ENCODE measurements at regions of chr7 and their contacts with region 1.

Region 1: DNA sequence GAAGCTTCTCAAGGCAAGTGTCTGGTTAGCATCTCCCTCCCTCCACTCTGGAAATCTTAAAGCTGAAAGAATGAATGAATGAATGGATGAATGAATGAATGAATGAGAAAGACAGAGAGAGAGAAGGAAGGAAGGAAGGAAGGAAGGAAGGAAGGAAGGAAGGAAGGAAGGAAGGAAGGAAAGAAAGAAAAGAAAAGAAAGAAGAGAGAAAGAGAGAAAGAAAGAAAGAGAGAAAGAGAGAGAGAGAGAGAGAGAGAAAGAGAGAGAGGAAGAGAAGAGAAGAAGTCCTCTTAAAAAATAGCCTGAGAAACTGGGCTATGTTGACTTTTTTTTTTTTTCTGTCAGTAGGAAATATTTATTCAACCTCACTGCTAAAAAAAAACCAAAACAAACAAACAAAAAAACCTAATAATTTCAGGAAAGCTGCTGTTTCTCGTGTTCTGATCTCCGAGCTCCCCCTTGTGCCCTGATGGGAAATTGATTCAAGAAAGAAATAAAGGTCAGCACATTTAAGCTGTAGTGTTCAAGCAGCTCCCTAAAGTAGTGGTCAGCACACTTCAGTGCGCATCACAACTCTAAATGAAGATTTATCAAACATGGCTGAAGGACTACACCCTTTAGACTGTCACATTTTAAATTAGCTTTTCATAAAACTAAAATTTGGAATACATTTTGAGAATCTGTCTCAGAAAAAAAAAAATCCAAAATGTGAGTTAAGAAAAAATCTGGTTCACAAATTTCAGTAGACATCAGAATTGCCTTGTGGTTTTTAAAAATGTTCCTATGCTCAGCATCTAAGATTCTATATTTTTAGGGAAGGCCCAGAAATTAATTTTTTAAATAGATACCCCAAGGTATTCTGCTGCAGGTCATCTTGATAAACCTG is 154.3 kb downstream of the ELAPOR2 start:
- DNase-seq: no peak
- ATAC-seq: peak; percentile 61; the same call in 2 of the 3 replicates
- H3K4me3 ChIP-seq: no peak overlapping the region
- H3K27ac ChIP-seq: no peak overlapping the region
- H3K4me1 ChIP-seq: no peaks in the 10 kb centered on the region
- H3K27me3 ChIP-seq: no peaks in the 10 kb centered on the region
- CTCF ChIP-seq: peak; percentile 55 to 67 (median 62)
- EP300 ChIP-seq: no peak
- POLR2A ChIP-seq: no peak
- RAD21 ChIP-seq: peak; percentile 95

Region 2: GRCh38 chr7:85882335-85882734 is 1022.9 kb before region 1 on chr7:
- CTCF ChIA-PET with region 1: interaction called, 3 read pairs
- POLR2A ChIA-PET with region 1: no interaction called
- RAD21 ChIA-PET with region 1: no interaction called
- SMC1A ChIA-PET with region 1: no interaction called
- in situ Hi-C with region 1: loop called (anchors 10 kb)
- intact Hi-C with region 1: no loop called
- DNase-seq: no peak
- ATAC-seq: no peak
- H3K4me3 ChIP-seq: no peak overlapping the region
- H3K27ac ChIP-seq: no peak overlapping the region
- H3K4me1 ChIP-seq: no peaks in the 10 kb centered on the region
- H3K27me3 ChIP-seq: no peaks in the 10 kb centered on the region
- CTCF ChIP-seq: no peak
- EP300 ChIP-seq: no peak
- POLR2A ChIP-seq: no peak
- RAD21 ChIP-seq: no peak

Region 3: DNA sequence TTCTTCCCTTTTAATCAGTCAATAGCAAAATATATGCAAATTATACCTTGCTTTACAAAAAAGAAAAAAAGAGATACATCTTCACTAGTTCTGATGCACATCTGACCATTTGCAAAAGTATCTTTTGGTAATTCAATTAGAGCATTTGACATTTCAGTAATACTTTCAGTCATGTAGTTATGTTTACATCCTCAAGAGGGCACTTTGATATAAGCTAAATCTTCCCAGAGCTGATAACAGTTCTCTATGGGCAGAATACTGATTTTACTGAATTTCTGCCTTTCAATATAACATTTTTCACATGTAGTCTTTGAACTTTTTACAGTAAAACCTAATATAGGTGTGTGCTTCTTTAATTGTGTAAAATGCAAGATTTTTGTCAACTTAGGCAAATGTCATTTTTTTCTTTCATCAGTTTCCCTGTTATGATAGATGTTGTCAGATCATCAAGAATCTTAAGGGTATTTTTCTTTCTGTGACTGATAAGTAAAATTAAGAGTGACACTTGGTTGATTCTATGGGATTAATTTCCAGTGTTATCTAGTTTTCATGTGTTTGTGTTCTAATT is 1014.9 kb before region 1 on chr7:
- CTCF ChIA-PET with region 1: interaction called, 9 read pairs
- POLR2A ChIA-PET with region 1: no interaction called
- RAD21 ChIA-PET with region 1: interaction called, 12 read pairs
- SMC1A ChIA-PET with region 1: interaction called, 4 read pairs
- in situ Hi-C with region 1: loop called (anchors 10 kb)
- intact Hi-C with region 1: loop called (anchors 2 kb)
- DNase-seq: no peak
- ATAC-seq: peak; percentile 66
- H3K4me3 ChIP-seq: no peak overlapping the region
- H3K27ac ChIP-seq: no peak overlapping the region
- H3K4me1 ChIP-seq: no peaks in the 10 kb centered on the region
- H3K27me3 ChIP-seq: no peaks in the 10 kb centered on the region
- CTCF ChIP-seq: peak; percentile 42 to 57 (median 55); a peak in 5 of 6 replicates
- EP300 ChIP-seq: no peak
- POLR2A ChIP-seq: no peak
- RAD21 ChIP-seq: peak; percentile 77

Region 4: DNA sequence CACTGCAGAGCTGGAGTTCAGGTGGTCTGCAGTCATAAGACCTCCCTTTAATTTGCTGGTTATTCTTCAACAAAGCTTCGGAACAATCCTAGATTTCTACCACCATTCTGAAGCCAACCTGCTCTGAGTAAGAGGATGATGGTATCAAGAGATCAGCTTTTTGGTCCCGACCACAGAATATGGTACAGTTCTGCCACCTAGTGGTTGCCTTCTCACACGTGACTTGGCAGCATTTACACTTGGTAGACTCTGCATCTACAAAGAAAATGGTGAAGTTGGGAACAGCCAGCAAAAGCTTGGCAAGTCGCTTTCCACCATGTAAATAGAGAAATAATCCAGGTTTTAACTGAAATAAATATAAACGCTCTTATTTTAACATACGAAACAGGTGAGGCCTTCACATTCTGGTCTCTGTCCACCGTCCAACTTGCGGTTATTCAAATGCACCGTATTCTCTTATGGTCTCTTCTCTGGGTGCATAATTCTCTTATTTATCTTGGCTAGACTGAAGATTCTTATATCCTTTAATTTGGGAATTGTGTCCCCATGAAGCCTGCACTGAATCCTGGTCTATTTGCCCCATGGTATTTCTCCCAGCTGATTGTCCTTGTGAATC is 435.4 kb before region 1 on chr7:
- CTCF ChIA-PET with region 1: no interaction called
- POLR2A ChIA-PET with region 1: no interaction called
- RAD21 ChIA-PET with region 1: interaction called, 4 read pairs
- SMC1A ChIA-PET with region 1: no interaction called
- in situ Hi-C with region 1: no loop called
- intact Hi-C with region 1: loop called (anchors 5 kb)
- DNase-seq: peak; percentile 27
- ATAC-seq: peak; percentile 96
- H3K4me3 ChIP-seq: no peak overlapping the region
- H3K27ac ChIP-seq: no peak overlapping the region
- H3K4me1 ChIP-seq: no peaks in the 10 kb centered on the region
- H3K27me3 ChIP-seq: no peaks in the 10 kb centered on the region
- CTCF ChIP-seq: peak; percentile 67 to 81 (median 79)
- EP300 ChIP-seq: no peak
- POLR2A ChIP-seq: no peak
- RAD21 ChIP-seq: peak; percentile 86

Region 5: DNA sequence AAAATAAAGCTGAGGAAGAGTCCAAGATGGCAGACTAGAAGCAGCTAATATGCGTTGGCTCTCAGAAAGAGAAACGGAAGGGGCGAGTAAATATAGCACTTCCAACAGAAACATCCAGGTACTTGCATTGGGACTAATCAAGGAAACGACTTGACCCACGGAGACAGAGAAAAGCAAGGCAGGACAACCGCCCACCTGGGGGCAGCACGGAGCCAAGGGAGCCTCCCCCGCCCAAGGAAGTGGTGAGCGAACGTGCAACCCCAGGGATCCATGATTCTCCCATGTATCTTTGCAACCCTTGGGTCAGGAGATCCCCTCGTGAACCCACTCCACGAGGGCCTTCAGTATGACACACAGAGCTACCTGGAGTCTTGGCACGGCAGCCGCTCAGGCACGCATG is 306.9 kb before region 1 on chr7:
- CTCF ChIA-PET with region 1: interaction called, 3 read pairs
- POLR2A ChIA-PET with region 1: no interaction called
- RAD21 ChIA-PET with region 1: no interaction called
- SMC1A ChIA-PET with region 1: interaction called, 3 read pairs
- in situ Hi-C with region 1: no loop called
- intact Hi-C with region 1: loop called (anchors 1 kb)
- DNase-seq: no peak
- ATAC-seq: peak; percentile 79
- H3K4me3 ChIP-seq: no peak overlapping the region
- H3K27ac ChIP-seq: no peak overlapping the region
- H3K4me1 ChIP-seq: no peaks in the 10 kb centered on the region
- H3K27me3 ChIP-seq: no peaks in the 10 kb centered on the region; a peak in 1 of 4 replicates
- CTCF ChIP-seq: peak; percentile 26 to 66 (median 35); a peak in 5 of 6 replicates
- EP300 ChIP-seq: no peak
- POLR2A ChIP-seq: no peak
- RAD21 ChIP-seq: peak; percentile 58

Region 6: DNA sequence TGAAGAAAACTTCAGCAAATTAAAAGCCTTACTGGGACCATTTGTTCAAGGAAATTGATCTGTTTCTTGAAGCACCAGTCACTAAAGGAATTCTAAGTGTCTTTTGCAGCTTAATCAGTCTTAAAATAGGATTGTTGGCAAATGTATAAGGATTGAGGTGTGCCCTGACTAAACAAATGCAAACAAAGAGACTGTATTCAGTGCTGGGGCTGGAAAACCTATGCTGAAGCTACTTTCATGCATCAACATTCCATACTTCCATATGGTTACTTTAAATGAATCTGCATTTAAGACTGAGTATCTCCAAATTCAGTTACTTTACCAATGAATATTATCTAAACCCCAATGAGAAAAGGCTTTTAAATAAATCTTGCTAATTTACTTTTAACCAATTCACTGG is 29.0 kb before region 1 on chr7:
- CTCF ChIA-PET with region 1: no interaction called
- POLR2A ChIA-PET with region 1: no interaction called
- RAD21 ChIA-PET with region 1: no interaction called
- SMC1A ChIA-PET with region 1: no interaction called
- in situ Hi-C with region 1: no loop called
- intact Hi-C with region 1: no loop called
- DNase-seq: no peak
- ATAC-seq: no peak
- H3K4me3 ChIP-seq: no peak overlapping the region
- H3K27ac ChIP-seq: no peak overlapping the region
- H3K4me1 ChIP-seq: no peaks in the 10 kb centered on the region
- H3K27me3 ChIP-seq: no peaks in the 10 kb centered on the region
- CTCF ChIP-seq: no peak
- EP300 ChIP-seq: no peak
- POLR2A ChIP-seq: no peak
- RAD21 ChIP-seq: no peak

Region 7: DNA sequence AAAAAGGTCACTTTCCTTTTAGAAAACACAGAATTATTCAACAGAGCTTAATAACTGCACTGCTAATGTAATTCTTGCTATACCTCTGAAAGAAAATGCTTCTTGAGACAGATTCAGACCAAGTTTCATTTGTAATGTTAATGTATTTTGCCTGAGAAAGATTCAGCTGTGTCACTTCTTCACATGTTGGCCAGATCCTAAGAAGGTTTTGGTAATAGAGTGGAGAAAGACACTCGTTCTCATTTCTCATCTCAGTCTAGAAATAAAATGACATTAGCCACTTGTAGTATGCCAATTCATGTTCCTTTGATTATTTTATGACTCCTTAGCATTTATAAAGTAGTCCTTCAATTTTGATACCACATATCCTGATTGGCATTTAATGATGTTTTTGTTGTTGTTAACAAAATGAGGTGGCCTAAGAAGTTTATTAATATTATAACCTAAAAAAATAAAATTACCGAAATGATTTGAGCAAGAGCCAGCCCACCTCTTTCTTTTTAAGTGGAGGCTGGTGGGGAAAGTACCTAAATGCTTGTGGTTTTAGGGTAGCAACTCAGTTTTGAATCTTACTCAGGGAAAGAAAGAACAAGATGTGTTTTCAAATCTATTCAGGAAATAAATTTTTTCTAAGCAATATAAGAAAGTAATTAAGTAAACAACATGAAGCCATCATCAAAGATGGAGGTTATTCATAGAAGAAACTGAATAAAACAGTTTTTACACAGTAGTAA is 170.6 kb after region 1 on chr7:
- CTCF ChIA-PET with region 1: no interaction called
- POLR2A ChIA-PET with region 1: no interaction called
- RAD21 ChIA-PET with region 1: no interaction called
- SMC1A ChIA-PET with region 1: no interaction called
- in situ Hi-C with region 1: no loop called
- intact Hi-C with region 1: no loop called
- DNase-seq: no peak
- ATAC-seq: peak; percentile 41; the same call in 1 of the 3 replicates
- H3K4me3 ChIP-seq: no peak overlapping the region
- H3K27ac ChIP-seq: no peak overlapping the region; the same call in 1 of the 2 replicates
- H3K4me1 ChIP-seq: no peaks in the 10 kb centered on the region
- H3K27me3 ChIP-seq: no peaks in the 10 kb centered on the region
- CTCF ChIP-seq: no peak
- EP300 ChIP-seq: no peak
- POLR2A ChIP-seq: no peak
- RAD21 ChIP-seq: no peak

Region 8: DNA sequence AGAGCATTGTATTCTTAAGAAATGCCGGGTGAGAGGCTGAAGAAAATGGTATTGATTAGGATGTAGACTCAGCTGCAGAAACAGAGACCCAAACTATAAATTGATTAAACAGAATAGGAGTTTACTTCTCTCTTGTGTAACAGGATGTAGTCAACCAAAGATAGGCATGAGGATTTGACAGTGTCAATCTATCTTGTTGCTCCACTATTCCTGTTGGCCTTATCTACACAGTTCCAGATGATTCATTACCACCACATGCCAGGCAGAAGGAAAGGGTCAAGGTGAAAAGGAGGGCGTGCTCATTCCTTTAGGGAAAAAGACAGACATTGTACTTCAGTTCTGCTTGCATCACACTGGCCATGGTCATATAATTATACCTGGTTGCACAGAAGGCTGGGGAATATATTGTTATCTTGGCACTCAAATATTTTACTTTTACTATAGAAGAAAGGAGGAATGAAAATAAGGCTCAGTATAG is 235.1 kb after region 1 on chr7:
- CTCF ChIA-PET with region 1: no interaction called
- POLR2A ChIA-PET with region 1: no interaction called
- RAD21 ChIA-PET with region 1: no interaction called
- SMC1A ChIA-PET with region 1: no interaction called
- in situ Hi-C with region 1: no loop called
- intact Hi-C with region 1: no loop called
- DNase-seq: no peak
- ATAC-seq: no peak
- H3K4me3 ChIP-seq: no peak overlapping the region
- H3K27ac ChIP-seq: no peak overlapping the region
- H3K4me1 ChIP-seq: peaks cover 22% of the 10 kb centered on the region
- H3K27me3 ChIP-seq: no peaks in the 10 kb centered on the region
- CTCF ChIP-seq: no peak
- EP300 ChIP-seq: no peak
- POLR2A ChIP-seq: no peak
- RAD21 ChIP-seq: no peak